ENCODE measurements at regions of chr19 and their contacts with region 1.

Region 1: GRCh38 chr19:34733826-34734600 is at the start of gene ZNF181:
- DNase-seq: peak; percentile 82
- ATAC-seq: peak; percentile 91
- H3K4me3 ChIP-seq: peak within 1 kb of the TSS; percentile 50 to 70
- H3K27ac ChIP-seq: peak within 1 kb of the TSS; percentile 72
- H3K4me1 ChIP-seq: peaks cover 4 to 17% of the 10 kb centered on the region in 2 experiments; a peak in 2 of 4 replicates
- H3K27me3 ChIP-seq: no peaks in the 10 kb centered on the region
- CTCF ChIP-seq: no peak
- POLR2A ChIP-seq: peak; percentile 47
- RAD21 ChIP-seq: no peak
- total RNA-seq, gene ZNF181: 4.0 TPM

Region 2: DNA sequence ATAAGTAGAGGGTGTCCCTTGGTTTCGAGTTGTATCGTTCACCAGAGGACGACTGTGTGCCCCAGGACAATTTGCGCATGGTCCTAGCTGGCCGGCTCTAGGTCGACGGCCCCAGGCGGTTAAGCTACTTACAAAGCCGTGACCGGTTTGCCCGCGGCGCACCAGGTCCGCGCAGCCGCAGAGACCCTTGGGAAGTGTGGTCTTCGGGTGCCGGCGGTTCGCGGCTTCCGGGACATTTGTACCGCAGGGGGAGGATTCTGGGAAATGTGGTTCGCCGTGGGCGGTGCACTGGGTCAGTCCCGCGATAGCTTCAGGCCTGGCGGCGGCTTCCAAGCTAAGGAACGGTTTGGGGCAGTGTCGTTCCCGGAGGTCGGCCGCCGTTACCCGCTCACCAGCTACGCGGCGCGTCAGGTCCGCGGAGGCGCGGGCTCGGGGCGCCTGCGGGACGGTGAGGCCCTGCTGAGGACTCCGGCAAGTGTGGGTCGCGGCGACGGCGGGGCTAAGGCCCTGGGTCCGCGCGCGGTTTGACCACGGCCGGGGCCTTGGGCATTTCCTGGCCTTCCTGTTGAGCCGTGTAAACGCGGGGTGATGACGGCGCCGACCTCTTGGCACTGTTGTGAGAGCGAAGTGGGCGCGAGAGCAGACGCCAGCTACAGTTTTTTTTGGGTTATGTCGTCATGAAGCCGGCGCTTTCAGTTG is 56.5 kb before region 1 on chr19 and contains the start of gene ZNF302:
- CTCF ChIA-PET with region 1: no interaction called
- POLR2A ChIA-PET with region 1: no interaction called
- RAD21 ChIA-PET with region 1: no interaction called
- intact Hi-C with region 1: loop called (anchors 1 kb)
- DNase-seq: peak; percentile 87
- ATAC-seq: peak; percentile 96
- H3K4me3 ChIP-seq: peak within 1 kb of the TSS; percentile 74 to 80
- H3K27ac ChIP-seq: peak within 1 kb of the TSS; percentile 92
- H3K4me1 ChIP-seq: peaks cover 7 to 15% of the 10 kb centered on the region in 2 experiments
- H3K27me3 ChIP-seq: no peaks in the 10 kb centered on the region
- CTCF ChIP-seq: no peak
- POLR2A ChIP-seq: peak; percentile 39
- RAD21 ChIP-seq: no peak
- total RNA-seq, gene ZNF302: 9.9 TPM

Measured in HCT116 (cell line).